WTC11 (cell line): ENCODE measurements at regions of chr4 and their contacts with region 1.

Region 1: GRCh38 chr4:140877781-140878180 is 121.6 kb upstream of the TBC1D9 start:
- DNase-seq: no peak
- ATAC-seq: no peak
- H3K4me3 Mint-ChIP-seq: no peak overlapping the region
- H3K27ac Mint-ChIP-seq: no peak overlapping the region
- H3K4me1 Mint-ChIP-seq: peaks cover 10% of the 10 kb centered on the region
- H3K27me3 Mint-ChIP-seq: no peaks in the 10 kb centered on the region; the same call in 1 of the 2 replicates
- CTCF ChIP-seq: no peak

Region 2: GRCh38 chr4:141346144-141346543 is 468.4 kb after region 1 on chr4:
- CTCF ChIA-PET with region 1: no interaction called
- POLR2A ChIA-PET with region 1: interaction called, 12 read pairs
- DNase-seq: no peak
- ATAC-seq: peak; percentile 46; the same call in 1 of the 2 replicates
- H3K4me3 Mint-ChIP-seq: no peak overlapping the region
- H3K27ac Mint-ChIP-seq: no peak overlapping the region
- H3K4me1 Mint-ChIP-seq: no peaks in the 10 kb centered on the region
- H3K27me3 Mint-ChIP-seq: no peaks in the 10 kb centered on the region; the same call in 1 of the 2 replicates
- CTCF ChIP-seq: no peak